ENCODE measurements at regions of chr11 and their contacts with region 1.

Region 1: GRCh38 chr11:42823546-42823945 is 488.2 kb upstream of the API5 start:
- DNase-seq: no peak
- H3K4me3 Mint-ChIP-seq: no peak overlapping the region
- H3K27ac Mint-ChIP-seq: no peak overlapping the region
- H3K4me1 Mint-ChIP-seq: no peaks in the 10 kb centered on the region
- H3K27me3 Mint-ChIP-seq: no peaks in the 10 kb centered on the region
- CTCF ChIP-seq: no peak

Region 2: GRCh38 chr11:42707541-42707940 is 116.0 kb before region 1 on chr11:
- CTCF ChIA-PET with region 1: no interaction called
- intact Hi-C with region 1: no loop called
- DNase-seq: no peak
- H3K4me3 Mint-ChIP-seq: no peak overlapping the region
- H3K27ac Mint-ChIP-seq: no peak overlapping the region
- H3K4me1 Mint-ChIP-seq: no peaks in the 10 kb centered on the region
- H3K27me3 Mint-ChIP-seq: no peaks in the 10 kb centered on the region
- CTCF ChIP-seq: no peak

Region 3: DNA sequence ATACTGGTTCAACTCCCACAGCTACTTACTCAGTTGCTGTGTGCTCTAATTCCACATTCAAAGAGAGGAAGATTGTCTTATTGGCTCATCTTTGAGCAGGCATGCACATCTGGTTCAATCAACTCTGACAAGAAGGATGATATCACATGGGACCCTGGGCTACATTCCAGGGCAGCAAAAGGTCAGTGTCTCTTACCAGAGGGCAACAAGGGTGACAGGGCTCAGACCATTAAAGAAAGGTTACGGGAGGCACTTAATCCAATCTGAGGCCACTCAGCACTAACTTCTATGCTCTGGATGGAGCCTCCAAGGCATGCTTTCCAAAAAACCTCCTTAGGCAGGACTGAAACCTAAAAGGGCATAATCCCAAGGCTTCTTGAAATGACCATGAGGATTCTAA is 61.2 kb before region 1 on chr11:
- CTCF ChIA-PET with region 1: no interaction called
- intact Hi-C with region 1: loop called (anchors 10 kb)
- DNase-seq: no peak
- H3K4me3 Mint-ChIP-seq: no peak overlapping the region
- H3K27ac Mint-ChIP-seq: no peak overlapping the region
- H3K4me1 Mint-ChIP-seq: no peaks in the 10 kb centered on the region
- H3K27me3 Mint-ChIP-seq: no peaks in the 10 kb centered on the region
- CTCF ChIP-seq: no peak

Region 4: GRCh38 chr11:42802201-42802899 is 21.2 kb before region 1 on chr11:
- CTCF ChIA-PET with region 1: no interaction called
- intact Hi-C with region 1: no loop called
- DNase-seq: no peak
- H3K4me3 Mint-ChIP-seq: no peak overlapping the region
- H3K27ac Mint-ChIP-seq: no peak overlapping the region
- H3K4me1 Mint-ChIP-seq: no peaks in the 10 kb centered on the region
- H3K27me3 Mint-ChIP-seq: no peaks in the 10 kb centered on the region
- CTCF ChIP-seq: no peak